Activated CD4-positive, alpha-beta T cell treated with anti-CD3 and anti-CD28 coated beads for 36 hours (primary cell): ENCODE measurements at regions of chr2 and their contacts with region 1.

Region 1: DNA sequence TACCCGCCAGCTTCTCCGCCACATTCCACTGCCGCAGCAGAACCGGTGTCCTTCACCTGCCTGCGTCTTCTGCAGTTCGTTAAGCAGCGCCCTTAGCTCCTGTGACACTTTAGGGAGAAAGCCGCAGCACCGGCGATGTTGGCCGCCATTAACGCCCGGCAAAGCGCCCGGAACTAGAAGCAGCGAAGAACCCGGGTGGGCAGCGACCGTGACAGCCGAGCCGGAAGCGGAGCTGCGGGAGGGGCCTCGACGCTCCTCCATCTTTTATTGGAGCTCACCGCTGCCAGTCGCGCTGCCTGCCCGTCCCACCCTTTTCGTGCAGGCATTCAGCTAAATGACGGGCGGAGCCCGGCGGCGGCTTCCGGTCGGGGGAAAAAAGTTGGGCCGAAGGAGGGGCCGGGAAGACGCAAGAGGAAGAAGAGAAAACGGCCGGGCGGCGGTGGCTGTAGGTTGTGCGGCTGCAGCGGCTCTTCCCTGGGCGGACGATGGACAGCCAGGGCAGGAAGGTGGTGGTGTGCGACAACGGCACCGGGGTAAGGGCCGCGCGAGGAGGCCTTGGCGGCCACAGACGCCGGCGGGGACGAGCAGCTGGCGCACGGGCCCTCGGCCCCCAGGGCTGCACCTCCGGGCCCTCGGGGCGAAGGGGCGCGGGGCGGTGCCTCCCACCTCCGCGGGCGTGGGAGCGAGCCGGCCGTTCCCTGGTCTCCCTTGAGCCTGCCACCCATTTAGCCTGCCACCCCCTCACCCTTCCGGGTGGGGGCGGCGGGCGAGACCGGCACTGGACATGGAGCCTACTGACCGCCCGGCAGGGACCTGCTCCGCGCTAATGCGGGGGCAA is at the start of gene ACTR2:
- DNase-seq: peak; percentile 97
- ATAC-seq: peak; percentile 96
- H3K4me3 Mint-ChIP-seq: peak within 1 kb of the TSS; percentile 95
- H3K27ac Mint-ChIP-seq: peak within 1 kb of the TSS; percentile 98
- H3K4me1 Mint-ChIP-seq: peaks cover 30% of the 10 kb centered on the region
- H3K27me3 Mint-ChIP-seq: no peaks in the 10 kb centered on the region
- total RNA-seq, gene ACTR2: 326 to 388 TPM

Region 2: GRCh38 chr2:64018923-64019718 is 1208.5 kb before region 1 on chr2 and contains the start of gene VPS54:
- CTCF ChIA-PET with region 1: no interaction called
- POLR2A ChIA-PET with region 1: no interaction called
- intact Hi-C with region 1: loop called in 1 of 2 experiments (anchors 5 kb)
- DNase-seq: peak; percentile 74
- ATAC-seq: peak; percentile 80
- H3K4me3 Mint-ChIP-seq: peak within 1 kb of the TSS; percentile 99
- H3K27ac Mint-ChIP-seq: peak within 1 kb of the TSS; percentile 98
- H3K4me1 Mint-ChIP-seq: peaks cover 37% of the 10 kb centered on the region
- H3K27me3 Mint-ChIP-seq: no peaks in the 10 kb centered on the region
- total RNA-seq, gene VPS54: 9.0 to 11.7 TPM

Region 3: GRCh38 chr2:65129826-65130663 is 97.6 kb before region 1 on chr2 and contains the start of gene RAB1A:
- CTCF ChIA-PET with region 1: interaction called, 4 read pairs
- POLR2A ChIA-PET with region 1: interaction called, 13 read pairs
- intact Hi-C with region 1: loop called (anchors 1 kb)
- DNase-seq: peak; percentile 100
- ATAC-seq: peak; percentile 95
- H3K4me3 Mint-ChIP-seq: peak within 1 kb of the TSS; percentile 100
- H3K27ac Mint-ChIP-seq: peak within 1 kb of the TSS; percentile 100
- H3K4me1 Mint-ChIP-seq: peaks cover 30% of the 10 kb centered on the region
- H3K27me3 Mint-ChIP-seq: no peaks in the 10 kb centered on the region
- total RNA-seq, gene RAB1A: 77.1 to 84.8 TPM